ENCODE measurements at regions of chr14 and their contacts with region 1.

Region 1: DNA sequence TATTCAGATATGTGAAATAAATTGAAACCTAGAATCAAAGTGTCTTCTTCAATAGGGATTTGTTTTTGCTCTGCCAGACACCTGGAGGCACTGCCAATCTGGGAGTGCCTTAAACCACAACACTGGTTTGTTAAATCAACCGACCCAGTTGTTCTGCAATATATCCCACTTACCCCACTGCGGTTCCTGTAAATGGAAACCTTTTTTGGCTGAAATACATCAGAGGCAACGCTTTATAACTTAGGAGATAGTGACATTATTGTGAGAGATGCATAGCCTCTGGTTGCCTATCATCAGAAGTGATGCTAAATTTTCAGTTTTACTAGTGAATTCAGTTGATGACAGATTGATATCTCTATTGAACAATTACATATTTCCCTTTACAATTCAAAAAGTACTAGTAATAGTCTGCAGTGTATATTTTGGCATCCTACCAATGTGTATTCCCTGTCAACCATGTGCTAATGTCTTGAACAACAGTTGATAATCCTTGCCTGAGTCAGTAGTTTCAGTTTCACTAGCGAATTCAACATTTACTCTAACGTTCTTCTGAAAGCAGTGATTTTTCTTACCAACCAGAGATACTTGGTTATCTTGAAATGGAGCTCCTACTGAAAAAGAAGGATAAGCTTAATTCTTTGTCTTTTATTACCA is 30.5 kb downstream of the PPP2R5C start:
- DNase-seq: no peak
- H3K4me3 Mint-ChIP-seq: peak overlapping the region; percentile 16
- H3K27ac Mint-ChIP-seq: peak overlapping the region; percentile 8
- H3K4me1 Mint-ChIP-seq: peaks cover 30% of the 10 kb centered on the region
- H3K27me3 Mint-ChIP-seq: no peaks in the 10 kb centered on the region

Region 2: DNA sequence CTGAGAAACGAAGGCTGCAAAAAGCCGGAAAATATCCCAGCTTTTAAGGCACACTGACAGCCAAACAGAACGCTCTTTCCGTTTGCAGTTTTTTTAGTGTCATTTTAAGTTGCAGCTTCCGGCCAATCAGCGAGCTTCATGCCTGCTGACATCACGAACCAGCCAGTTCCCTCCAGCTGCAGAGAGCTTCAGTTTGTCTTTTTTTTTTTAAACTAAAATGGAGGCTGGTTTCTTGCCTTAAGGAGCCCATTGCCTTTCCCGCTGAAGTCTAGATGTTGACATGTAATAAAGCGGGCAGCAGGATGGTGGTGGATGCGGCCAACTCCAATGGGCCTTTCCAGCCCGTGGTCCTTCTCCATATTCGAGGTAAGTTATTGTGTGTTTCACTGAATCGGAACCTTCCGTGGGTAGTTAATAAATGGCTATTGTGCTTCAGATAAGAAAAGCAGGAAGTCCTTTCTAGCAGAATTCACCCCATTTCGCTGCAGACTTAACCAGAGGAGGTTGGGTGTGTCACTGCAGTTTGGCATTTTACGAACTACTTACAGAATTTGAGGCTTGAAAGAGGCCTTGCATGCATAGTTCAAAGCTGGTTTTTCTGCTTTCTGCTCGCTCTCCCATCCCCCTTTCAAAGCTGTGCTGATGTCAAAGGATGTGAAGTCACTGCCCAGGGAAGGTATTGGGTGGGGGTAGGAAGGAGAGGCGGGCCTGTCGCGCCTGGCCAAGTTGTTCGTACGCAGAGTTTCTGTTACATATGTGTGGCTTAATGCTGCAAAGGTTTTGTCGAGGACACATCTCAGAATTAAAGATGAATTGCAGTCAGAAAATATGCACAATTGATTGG is 17.8 kb after region 1 on chr14:
- CTCF ChIA-PET with region 1: interaction called, 4 read pairs
- POLR2A ChIA-PET with region 1: interaction called, 24 read pairs
- intact Hi-C with region 1: loop called (anchors 2 kb)
- DNase-seq: peak; percentile 91
- H3K4me3 Mint-ChIP-seq: peak overlapping the region; percentile 86
- H3K27ac Mint-ChIP-seq: peak overlapping the region; percentile 98
- H3K4me1 Mint-ChIP-seq: peaks cover 49% of the 10 kb centered on the region
- H3K27me3 Mint-ChIP-seq: no peaks in the 10 kb centered on the region

Region 3: GRCh38 chr14:101817501-101818001 is 25.5 kb after region 1 on chr14:
- CTCF ChIA-PET with region 1: interaction called, 3 read pairs
- POLR2A ChIA-PET with region 1: interaction called, 5 read pairs
- intact Hi-C with region 1: loop called (anchors 2 kb)
- DNase-seq: peak; percentile 63
- H3K4me3 Mint-ChIP-seq: peak overlapping the region; percentile 75
- H3K27ac Mint-ChIP-seq: peak overlapping the region; percentile 99
- H3K4me1 Mint-ChIP-seq: peaks cover 89% of the 10 kb centered on the region
- H3K27me3 Mint-ChIP-seq: no peaks in the 10 kb centered on the region

Region 4: GRCh38 chr14:101953151-101953550 is 161.1 kb after region 1 on chr14:
- CTCF ChIA-PET with region 1: no interaction called
- POLR2A ChIA-PET with region 1: no interaction called
- intact Hi-C with region 1: no loop called
- DNase-seq: no peak
- H3K4me3 Mint-ChIP-seq: no peak overlapping the region
- H3K27ac Mint-ChIP-seq: no peak overlapping the region
- H3K4me1 Mint-ChIP-seq: peaks cover 11% of the 10 kb centered on the region
- H3K27me3 Mint-ChIP-seq: no peaks in the 10 kb centered on the region